ENCODE measurements at regions of chr2 and their contacts with region 1.

Region 1: GRCh38 chr2:33412920-33413319 is 63.5 kb upstream of the RASGRP3 start:
- DNase-seq: no peak
- ATAC-seq: peak; percentile 39

Region 2: GRCh38 chr2:33441235-33441810 is 28.4 kb after region 1 on chr2:
- intact Hi-C with region 1: loop called (anchors 1 kb)
- DNase-seq: no peak
- ATAC-seq: peak; percentile 81

Region 3: GRCh38 chr2:33583194-33583938 is 170.4 kb after region 1 on chr2:
- intact Hi-C with region 1: loop called (anchors 1 kb)
- DNase-seq: no peak
- ATAC-seq: no peak